ENCODE measurements at regions of chr2 and their contacts with region 1.

Region 1: DNA sequence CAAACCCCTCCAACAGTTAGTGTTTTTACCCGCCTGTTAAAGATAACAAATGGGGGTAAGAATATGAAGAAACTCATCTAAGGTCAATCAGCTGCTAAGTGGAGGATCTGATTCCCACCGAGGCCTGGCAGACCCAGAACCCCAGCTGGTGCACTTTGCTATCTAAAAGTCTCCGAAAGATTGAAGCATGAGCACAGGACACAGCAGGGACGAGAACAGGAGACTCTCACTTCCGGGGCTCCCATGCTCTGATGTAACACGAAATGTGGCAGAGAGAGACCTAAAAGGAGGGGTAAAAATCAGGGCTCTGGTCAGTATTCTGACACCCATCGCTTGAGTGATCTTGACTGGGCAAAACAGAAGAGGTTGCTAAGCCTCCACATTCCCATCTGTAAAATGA is 119.7 kb downstream of the PDCL3 start:
- DNase-seq: no peak

Region 2: DNA sequence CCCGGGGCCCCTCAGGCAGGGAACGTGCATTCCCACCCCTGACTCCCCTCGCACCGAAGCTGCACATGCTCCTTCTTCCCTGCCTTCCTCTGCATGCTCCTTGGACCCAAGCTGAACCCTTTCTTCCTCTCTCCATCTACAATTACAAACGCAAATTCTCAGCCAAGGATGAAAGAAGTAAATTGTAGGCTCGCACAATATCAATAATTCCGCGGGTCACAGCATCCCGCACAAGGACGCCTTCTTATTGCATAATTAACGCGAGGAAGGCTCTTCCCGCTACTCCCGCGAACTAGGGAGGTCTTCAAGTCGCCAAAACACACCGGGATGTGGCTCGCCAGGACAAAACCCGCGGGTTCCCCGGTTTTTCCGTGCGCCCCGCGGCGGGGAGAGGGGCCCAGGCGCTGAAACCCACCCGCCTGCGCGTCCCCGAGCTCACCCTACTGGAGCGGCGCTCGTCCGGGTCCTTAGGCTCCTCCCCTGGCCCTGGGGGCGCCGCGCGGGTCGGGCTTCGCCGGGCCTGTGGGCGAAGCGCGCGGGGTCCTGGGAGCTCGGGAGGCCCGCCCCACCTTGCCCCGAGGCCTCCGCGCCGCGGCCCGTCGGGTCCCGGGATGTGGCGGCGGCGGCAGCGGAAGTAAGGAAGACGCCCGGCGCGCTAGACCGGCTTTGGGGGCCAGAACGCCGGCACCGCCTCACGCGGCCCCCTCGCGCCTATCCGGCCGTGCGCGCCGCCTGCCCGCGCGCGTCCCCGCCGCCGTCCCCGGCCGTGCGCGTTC is 265.4 kb before region 1 on chr2 and contains the start of gene CHST10:
- intact Hi-C with region 1: no loop called
- DNase-seq: no peak
- total RNA-seq, gene CHST10: 6.3 to 6.9 TPM

Region 3: GRCh38 chr2:100625717-100626116 is 56.8 kb before region 1 on chr2:
- intact Hi-C with region 1: loop called in 1 of 2 experiments (anchors 10 kb)
- DNase-seq: peak; percentile 62

Region 4: DNA sequence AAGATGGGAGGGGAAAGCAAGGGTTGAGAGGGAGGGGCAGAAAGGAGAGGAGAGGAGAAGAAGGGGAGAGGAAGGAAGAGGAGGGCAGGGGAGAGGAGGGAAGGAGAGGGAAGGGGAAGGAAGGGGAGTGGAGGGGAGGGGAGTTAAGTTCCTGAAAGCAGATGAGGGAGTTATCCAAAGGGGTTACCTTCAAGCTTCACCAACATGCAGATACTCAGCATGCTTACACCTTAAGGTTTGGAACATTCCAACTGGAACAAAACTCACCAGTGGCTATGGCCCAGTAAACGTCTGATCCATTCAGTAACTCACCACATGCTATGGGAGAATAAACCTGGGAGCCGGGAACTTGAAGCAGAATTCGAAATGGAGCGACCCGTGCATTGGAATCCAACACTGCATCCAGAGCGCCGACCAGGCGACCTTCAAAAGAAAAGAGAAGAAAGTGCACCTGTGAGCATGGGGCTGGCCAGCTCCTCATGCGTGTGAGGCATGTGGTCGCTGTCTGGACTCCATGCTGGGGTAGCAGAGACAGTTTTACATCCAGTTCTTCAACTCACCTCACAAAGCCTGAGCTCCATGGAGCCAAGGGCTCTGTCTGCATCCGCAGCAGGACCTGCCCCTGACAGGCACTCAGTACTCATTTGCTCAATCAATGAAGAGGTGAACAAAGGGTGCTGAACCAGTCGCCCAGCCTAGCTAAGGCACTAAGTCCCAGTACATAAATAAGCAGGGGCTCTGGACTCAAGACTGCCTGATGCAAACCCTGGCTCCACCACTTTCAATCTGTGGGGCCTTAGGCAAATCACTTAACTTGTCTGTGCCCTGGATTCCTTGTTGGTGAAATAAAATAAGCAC is 407.6 kb after region 1 on chr2:
- intact Hi-C with region 1: no loop called
- DNase-seq: peak; percentile 54